GM10248 (cell line): ENCODE measurements at regions of chr1 and their contacts with region 1.

Region 1: DNA sequence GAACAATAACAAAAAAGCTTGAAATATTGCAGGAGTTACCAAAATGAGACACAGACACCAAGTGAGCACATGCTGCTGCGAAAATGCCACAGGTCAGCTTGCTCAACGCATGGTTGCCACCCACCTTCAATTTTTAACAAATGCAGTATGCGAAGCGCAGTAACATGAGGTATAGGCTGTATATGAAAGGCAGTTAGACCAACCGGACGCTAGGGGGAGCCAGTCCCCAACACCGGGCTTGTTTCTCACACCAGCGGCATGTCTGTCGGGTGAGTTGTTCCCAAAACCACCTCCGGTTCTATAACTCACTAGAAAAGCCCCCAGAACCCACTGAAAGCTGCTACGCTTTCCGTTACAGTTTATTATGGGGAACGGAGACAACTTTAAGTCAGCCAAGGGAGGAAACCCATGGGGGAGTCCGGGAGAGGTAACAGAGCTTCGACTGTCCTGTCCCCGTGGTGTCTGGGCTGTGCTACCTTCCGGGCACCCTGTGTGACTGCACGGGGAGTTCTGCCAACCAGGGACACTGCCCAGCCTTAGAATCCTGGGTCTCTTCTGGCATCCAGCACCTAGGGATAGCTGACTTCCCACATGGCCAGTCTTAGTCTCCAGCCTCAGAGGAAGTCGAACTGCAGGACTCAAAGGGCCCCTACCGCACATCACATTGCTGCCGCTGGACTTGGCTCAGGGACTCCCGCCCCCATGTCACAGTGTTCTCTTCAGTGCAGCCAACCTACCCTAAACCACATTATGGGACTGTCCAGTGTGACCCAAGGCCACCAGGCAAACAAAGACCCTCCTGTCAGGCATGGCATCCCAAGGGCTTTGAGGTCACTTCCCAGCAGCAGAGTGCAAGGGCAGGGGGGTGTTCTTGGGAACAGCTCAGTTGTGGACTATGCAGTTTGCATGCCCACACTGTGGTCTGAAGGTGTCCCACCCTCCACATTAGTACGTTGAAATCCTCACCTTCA is 14.0 kb downstream of the RNF187 start:
- DNase-seq: peak; percentile 86
- CTCF ChIP-seq: peak; percentile 87

Region 2: DNA sequence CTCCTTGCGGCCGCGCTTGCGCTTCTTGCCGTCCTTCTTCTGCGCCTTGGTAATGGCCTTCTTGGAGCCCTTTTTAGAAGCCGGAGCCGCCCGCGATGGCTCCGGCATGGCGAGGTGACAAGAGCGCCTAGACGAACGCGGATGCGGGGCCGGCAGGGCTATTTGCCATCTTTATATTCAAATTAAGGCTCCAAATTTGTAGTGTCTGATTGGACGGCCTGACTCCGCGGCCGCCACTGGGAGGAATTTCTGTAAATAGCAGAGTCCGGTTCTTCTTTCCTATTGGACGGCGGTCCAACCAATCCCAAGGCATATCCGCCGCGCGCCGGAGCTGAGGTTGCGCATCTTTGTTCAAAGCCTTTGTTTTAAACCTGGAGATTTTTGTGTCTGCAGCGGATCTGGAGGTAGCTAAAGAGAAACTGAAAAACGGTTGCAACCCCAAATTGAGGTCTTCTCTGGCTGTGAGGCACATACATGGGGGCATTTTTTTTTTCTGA is 36.7 kb before region 1 on chr1:
- CTCF ChIA-PET with region 1: interaction called, 10 read pairs
- POLR2A ChIA-PET with region 1: no interaction called
- DNase-seq: peak; percentile 81
- CTCF ChIP-seq: no peak

Region 3: DNA sequence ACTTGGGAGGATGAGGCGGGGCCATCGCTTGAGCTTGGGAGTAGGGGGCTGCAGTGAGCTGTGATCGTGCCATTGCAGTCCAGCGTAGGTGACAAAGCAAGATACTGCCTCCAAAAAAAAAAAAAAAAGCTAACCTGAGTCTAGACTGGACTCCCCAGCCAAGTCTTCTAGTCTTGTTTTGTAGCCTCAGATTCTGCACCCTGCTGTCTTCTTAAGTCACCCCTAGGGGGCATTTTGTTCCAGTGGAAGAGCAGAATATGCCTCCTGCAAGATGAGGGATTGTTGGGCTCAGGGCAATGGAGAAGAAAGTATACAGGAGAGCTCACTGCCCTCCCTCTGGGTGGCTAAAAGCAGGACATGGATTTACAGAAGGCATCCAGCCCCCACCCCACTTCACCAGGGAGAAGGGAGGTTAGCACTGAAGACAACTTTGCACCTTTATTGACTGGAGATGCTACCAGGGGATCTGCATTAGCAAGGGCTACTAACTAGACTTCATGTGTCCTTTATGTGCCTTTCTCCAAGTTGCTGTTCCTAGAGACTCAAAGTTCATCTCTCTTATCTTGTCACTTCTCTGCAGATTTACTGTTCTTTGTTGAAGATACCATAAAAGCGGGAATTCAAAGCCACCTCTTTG is 29.3 kb before region 1 on chr1:
- CTCF ChIA-PET with region 1: interaction called, 10 read pairs
- POLR2A ChIA-PET with region 1: no interaction called
- DNase-seq: peak; percentile 61
- CTCF ChIP-seq: peak; percentile 62

Region 4: DNA sequence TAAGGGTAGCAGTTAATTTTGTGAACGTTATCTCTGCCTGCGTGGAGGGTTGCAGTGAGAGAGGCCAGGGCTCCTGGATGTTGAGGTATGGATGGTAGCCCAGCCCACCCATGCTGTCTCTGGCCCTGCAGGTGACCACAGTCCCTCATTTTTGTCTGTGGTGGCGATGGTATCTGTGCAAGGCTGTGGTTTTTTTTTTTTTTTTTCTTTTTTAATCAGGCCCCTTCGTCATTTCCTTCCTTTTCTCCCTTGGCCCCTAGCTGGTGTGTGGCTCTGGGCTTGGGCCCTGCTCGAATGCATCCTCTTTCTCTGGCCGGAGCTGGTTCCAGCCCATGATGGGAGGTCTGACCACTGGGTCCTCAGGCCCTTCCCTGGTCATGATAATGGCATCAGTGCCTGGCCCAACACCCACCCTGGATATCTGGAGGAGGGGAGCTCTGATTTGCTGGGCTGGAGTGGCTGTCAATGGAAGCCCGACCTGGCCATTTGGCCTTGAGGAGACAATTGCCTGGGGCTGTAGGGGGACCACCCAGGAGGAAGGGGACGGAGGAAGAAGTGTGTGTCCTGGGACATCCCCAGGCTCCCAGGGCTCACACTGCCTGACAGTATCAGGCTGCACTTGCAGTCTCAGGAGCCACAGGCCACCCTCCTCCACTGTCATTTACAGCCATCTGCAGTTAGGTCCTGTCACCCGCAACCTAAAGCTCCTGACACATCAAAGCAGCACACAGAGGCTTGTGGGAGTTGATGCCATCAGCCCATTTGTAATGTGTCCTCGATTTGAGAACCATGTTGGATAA is 22.1 kb before region 1 on chr1:
- CTCF ChIA-PET with region 1: interaction called, 10 read pairs
- POLR2A ChIA-PET with region 1: interaction called, 11 read pairs
- DNase-seq: no peak
- CTCF ChIP-seq: peak; percentile 9

Region 5: GRCh38 chr1:228486596-228487335 is 14.4 kb before region 1 on chr1:
- CTCF ChIA-PET with region 1: interaction called, 17 read pairs
- POLR2A ChIA-PET with region 1: no interaction called
- DNase-seq: peak; percentile 81
- CTCF ChIP-seq: no peak

Region 6: GRCh38 chr1:228515200-228515834 is 14.1 kb after region 1 on chr1:
- CTCF ChIA-PET with region 1: interaction called, 54 read pairs
- POLR2A ChIA-PET with region 1: no interaction called
- DNase-seq: peak; percentile 51
- CTCF ChIP-seq: peak; percentile 57

Region 7: DNA sequence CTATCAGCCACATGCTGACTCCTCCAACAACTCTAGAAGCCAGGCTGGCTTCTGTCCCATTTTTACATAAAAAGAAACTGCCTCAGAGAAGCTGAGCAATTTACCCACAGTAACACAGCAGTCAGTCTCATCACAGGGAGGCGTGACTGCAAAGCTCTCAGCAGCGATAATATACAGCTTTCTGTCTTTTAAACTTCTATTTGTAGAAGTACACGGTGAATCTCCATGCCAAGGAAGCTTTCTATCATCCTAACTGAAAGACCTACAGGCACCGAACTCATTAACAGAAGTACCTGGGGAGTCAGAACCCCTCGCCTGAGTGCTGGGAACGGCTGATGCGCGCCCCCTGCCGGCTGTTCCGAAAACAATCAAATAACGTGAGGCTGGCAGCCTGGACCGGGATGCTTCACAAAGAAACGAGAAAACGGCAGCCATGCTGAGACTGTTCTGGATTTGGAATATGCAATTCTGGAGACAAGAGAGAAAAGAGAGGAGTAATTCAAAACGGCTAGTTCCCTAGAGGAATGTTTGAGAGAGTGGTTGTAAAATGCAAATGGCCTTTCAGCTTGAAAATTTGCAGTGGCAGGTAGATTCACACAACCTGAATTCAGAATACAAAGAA is 726.2 kb after region 1 on chr1:
- CTCF ChIA-PET with region 1: interaction called, 13 read pairs
- POLR2A ChIA-PET with region 1: no interaction called
- DNase-seq: peak; percentile 77
- CTCF ChIP-seq: peak; percentile 75